Heart left ventricle (tissue), 16 donors: ENCODE measurements at regions of chr5 and their contacts with region 1.

Region 1: DNA sequence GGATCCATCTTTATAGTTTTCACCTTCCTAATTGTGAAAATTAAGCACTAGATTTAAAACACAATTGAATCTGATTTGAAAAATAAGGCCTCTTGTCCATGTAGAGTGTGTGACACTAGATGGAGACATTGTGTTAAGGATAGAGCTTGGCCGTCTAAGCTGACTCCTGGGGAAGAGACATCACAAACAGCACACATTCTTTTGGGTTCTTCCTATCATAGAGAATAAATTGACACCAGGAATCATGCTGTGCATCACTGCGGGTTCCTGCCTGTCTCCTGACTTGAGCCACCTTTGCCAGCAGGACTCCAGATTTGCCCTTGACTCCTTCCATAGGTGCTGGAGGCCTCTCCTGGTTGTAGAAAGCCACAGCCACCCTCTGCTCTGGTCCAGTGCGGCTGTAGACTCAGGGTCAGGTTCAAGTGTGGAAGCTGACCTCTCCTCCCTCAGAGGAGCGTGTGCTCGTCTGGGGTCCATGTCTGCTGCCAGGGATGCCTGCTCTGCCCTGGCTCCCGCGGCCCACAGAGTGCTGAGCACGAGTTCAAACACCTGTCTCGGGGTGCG is 11.2 kb downstream of the ROPN1L start:
- DNase-seq: no peak
- ATAC-seq: peak; percentile 74 to 84 (median 82)
- H3K4me3 ChIP-seq: no peak overlapping the region
- H3K27ac ChIP-seq: no peak overlapping the region
- H3K4me1 ChIP-seq: peaks cover 3 to 25% (median 12%) of the 10 kb centered on the region in 12 donors
- H3K27me3 ChIP-seq: no peaks in the 10 kb centered on the region
- CTCF ChIP-seq: peak; percentile 63 to 90 (median 80)
- POLR2A ChIP-seq: no peak

Region 2: DNA sequence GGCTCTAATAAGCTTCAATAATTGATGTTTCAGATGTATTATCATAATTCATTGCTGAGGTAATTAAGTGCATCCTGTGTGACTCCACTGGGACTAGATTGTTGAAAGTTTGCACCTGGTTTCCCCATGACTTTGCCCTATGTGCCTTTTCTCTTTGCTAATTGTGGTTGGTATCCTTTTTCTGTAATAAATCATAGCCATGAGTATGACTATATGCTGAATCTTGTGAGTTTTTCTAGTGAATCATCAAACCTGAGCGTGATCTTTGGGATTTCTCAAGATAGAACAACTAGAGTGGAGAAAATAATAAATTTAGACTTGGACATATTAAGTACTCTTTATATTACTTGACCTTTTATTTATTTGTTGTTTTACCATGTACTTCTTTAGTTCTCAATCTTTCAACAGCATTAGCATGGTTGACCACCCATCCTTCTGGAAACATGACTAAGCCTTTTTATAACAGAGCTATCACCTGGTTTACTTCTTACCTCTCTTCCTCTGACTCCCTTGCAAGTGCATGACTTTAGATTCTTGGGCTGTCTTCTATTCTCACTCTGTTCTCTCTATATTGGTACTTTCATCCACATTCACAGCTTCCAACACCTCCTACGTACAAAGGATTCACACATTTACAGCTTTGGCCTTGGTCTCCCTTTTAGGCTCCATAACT is 583.1 kb before region 1 on chr5:
- intact Hi-C with region 1: no loop called
- DNase-seq: no peak
- ATAC-seq: no peak
- H3K4me3 ChIP-seq: no peak overlapping the region
- H3K27ac ChIP-seq: no peak overlapping the region
- H3K4me1 ChIP-seq: no peaks in the 10 kb centered on the region
- H3K27me3 ChIP-seq: no peaks in the 10 kb centered on the region
- CTCF ChIP-seq: no peak
- POLR2A ChIP-seq: no peak

Region 3: DNA sequence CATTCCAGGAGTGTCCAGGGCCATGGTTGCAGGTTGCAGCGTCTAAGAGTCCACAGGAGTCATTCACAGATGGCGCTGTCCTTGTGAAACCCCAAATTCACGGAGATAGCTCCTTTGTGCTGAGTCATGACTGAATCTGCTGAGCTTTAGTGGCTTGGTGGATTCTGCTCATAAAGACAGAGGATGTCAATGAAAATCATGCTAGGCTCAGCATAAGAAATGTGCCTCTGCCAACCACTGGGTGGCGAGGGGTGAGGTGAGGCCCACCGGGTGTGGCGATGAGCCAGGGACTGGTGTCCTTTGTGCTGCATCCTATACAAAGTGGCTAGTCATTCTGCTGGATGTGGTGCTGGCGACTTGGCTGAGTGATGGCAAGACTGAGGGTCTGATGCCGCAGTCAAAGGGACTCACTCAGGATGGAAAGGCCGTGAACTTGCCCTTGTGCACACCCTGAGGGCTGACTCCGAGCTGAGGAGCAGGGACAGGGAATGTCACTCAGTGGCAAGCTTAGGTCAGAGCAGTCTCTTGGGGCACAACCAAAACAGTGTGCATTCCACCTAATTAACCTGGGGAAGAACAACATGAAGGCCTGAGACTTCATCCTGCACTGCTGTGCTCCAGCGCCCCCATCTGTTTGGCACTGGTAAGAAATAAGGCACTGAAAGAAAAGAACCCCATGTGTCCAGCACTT is 236.7 kb after region 1 on chr5:
- intact Hi-C with region 1: loop called in 1 of 10 experiments (anchors 5 kb)
- DNase-seq: no peak
- ATAC-seq: peak in 3 of 4 donors; percentile 14 to 22 (median 18)
- H3K4me3 ChIP-seq: no peak overlapping the region
- H3K27ac ChIP-seq: no peak overlapping the region
- H3K4me1 ChIP-seq: peaks cover 0 to 8% (median 0%) of the 10 kb centered on the region in 12 donors
- H3K27me3 ChIP-seq: no peaks in the 10 kb centered on the region
- CTCF ChIP-seq: peak in 5 of 12 donors; percentile 9 to 37 (median 18)
- POLR2A ChIP-seq: no peak